Activated T-helper 1 cell treated with anti-CD3 and anti-CD28 coated beads, Interleukin-12 subunit alpha, Interleukin-12 subunit beta, Interleukin-2, Interleukin-4 antibody, amounts not matched to agents 30 ng/mL and 10 ng/mL and 1 ng/mL, durations not matched to agents 14 hours and 24 hours and 36 hours (primary cell): ENCODE measurements at regions of chr10 and their contacts with region 1.

Region 1: DNA sequence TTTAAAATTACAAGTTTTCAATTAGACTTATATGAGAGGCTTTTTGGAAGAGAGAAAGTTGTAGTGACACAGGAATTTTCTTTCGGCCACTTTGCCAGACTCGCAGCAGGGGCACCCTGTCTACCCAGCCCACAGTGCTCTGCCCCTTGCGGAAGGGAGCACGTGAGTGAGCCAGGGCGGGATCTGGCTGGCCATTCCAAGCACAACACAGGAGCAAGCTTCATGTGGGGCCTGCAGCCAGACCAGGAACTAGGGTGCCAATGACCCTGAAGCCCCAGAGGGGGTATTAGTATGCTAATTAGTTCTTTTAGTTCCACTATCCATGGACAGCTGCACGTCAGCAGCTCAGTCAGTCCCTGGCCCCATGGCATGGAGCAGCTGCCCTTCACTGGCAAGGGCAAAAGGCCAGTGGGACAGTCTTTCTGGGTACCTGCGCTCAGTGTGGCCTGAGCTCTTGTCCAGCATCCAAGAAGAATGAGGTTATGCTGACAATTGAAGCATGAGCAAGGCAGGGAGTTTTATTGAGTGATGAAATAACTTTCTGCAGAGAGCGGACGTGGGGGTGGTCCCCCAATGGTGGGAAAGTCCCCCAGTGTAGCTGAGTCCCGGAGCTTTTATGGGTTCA is 251.1 kb upstream of the CSTF2T start:
- DNase-seq: no peak
- H3K4me3 Mint-ChIP-seq: no peak overlapping the region
- H3K27ac Mint-ChIP-seq: no peak overlapping the region
- H3K4me1 Mint-ChIP-seq: no peaks in the 10 kb centered on the region
- H3K27me3 Mint-ChIP-seq: peaks cover 6% of the 10 kb centered on the region

Region 2: DNA sequence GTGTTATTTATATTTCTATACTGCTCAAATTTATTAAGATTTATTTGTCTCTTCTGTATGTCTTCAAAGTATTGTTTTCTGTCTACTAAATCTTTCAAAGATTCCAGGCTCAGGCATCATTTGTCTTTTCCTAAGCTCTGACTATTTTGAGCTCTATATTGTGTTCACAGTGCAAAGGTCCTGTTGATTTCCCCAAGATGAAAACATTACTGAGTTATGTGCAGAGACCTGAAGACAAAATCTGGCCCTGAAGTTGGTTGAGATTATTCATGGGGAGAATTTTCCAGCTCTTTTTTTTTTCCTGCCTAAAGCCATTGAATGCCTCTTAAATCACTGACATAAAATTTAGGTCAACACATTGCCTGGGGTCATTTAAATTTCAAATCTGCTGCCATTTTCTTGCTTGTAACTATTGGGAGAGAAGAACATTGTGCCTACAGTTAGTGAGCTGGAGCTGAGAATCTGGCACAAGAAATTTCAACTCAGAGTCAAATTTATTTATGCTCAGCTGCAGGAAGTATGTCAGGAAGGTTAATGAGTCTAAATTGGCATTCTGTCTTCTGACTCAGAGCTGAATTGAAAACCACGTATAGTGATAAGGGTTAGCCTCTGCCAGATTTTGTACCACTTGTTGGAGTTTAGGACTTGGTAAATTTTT is 282.7 kb before region 1 on chr10:
- intact Hi-C with region 1: loop called (anchors 10 kb)
- DNase-seq: no peak
- H3K4me3 Mint-ChIP-seq: no peak overlapping the region
- H3K27ac Mint-ChIP-seq: no peak overlapping the region
- H3K4me1 Mint-ChIP-seq: no peaks in the 10 kb centered on the region
- H3K27me3 Mint-ChIP-seq: peaks cover 23% of the 10 kb centered on the region